Activated B cell treated with CpG ODN at 0.5 μM for 24 hours (primary cell): ENCODE measurements at regions of chr2 and their contacts with region 1.

Region 1: DNA sequence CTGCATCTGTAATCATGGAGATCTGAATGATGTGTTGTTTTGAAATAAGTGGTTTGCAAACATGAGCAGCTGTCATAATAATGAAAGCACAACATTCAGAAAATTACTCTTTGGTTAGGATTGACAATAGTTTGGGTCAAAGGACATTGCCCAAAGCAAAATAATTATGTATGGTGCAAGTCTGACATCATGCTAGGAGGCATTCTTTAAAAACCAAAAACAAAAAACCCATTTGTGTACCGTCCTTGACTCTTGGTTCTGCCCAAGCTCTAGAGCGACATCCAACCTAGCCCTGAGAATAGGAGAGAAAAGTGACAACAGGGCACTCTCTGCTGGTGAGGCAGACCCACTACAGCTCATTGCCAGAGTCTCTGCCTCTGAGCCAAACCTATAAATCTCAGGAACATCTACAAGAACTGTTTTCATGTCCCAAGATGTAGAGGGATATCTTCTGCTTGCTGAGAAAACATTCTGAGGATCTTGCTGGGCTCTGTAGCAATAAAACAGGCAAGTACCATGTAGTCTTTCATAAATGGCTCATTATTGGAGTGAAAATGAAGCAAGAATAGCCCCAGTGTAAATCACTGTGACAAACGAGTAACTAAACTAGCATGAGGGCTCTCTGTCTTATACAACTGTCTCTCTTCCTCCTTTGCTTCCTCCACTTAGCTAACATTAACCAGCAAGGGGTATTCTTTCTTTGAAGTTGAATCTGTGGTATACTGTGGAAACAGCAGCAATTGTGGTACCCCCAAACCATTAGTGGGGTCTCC is 266.8 kb upstream of the CXCR4 start:
- DNase-seq: no peak
- ATAC-seq: peak; percentile 67
- H3K4me3 Mint-ChIP-seq: peak overlapping the region; percentile 33
- H3K27ac Mint-ChIP-seq: peak overlapping the region; percentile 94
- H3K4me1 Mint-ChIP-seq: peaks cover 50% of the 10 kb centered on the region
- H3K27me3 Mint-ChIP-seq: no peaks in the 10 kb centered on the region
- CTCF ChIP-seq: peak; percentile 38

Region 2: DNA sequence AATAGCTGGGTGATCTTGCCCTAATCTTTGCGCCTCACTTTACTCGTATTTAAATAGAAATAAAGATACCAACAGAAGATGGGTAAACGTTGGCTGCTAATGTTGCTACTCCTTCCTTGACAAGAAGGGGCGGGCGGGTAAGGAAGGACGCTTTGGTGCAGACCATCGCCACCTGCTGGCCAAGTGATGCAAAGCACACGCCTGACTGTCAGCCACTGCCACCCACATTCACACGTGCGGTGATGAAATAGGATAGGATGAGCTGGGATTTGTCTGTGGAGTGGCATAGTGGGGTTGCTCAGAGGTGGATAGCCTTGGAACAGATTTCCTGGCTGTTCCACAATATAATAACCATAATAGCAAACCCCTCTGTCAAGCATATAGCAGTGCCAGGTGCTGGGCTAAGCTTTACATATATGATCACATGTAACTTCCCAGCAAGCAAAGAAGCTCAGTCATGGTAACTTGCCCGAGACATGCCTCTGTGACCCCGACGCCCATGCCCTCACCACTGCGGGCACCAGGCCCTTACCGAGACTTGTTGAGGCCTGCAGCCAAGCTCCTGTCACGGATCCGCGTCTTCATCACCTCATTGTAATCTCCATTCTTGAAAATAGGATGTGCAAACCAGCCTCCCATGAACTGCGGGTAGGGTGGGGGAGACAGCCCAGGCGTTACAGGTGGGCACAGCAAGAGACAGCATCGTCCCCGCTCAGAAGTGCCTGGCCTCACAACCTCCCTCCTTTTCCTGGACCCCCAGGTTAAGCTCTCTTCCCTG is 587.0 kb before region 1 on chr2:
- CTCF ChIA-PET with region 1: interaction called, 10 read pairs
- POLR2A ChIA-PET with region 1: no interaction called
- intact Hi-C with region 1: no loop called
- DNase-seq: peak; percentile 59
- ATAC-seq: peak; percentile 81
- H3K4me3 Mint-ChIP-seq: no peak overlapping the region
- H3K27ac Mint-ChIP-seq: no peak overlapping the region
- H3K4me1 Mint-ChIP-seq: peaks cover 15% of the 10 kb centered on the region
- H3K27me3 Mint-ChIP-seq: no peaks in the 10 kb centered on the region
- CTCF ChIP-seq: peak; percentile 62

Region 3: DNA sequence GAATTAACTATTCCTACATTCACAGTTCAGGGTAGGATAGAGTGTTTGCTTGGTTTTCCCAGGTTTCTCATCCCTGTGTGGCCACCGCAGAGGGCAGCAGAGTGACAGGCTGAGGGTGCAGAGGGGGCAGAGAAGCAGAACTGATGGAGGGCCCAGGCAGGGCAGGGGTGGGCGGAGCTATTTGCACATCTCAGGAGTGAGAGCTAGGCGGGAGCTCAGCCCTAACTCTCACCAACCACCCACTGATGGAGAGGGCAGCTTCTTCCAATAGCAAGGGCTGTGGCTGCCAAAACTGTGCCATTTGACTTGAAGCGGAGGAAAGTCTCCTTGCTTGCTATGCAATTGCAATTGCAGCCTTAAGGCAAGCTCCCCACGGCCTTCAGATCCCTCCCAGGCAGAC is 387.3 kb before region 1 on chr2:
- CTCF ChIA-PET with region 1: interaction called, 77 read pairs
- POLR2A ChIA-PET with region 1: interaction called, 30 read pairs
- intact Hi-C with region 1: no loop called
- DNase-seq: peak; percentile 41
- ATAC-seq: peak; percentile 97
- H3K4me3 Mint-ChIP-seq: peak overlapping the region; percentile 24
- H3K27ac Mint-ChIP-seq: peak overlapping the region; percentile 86
- H3K4me1 Mint-ChIP-seq: peaks cover 51% of the 10 kb centered on the region
- H3K27me3 Mint-ChIP-seq: no peaks in the 10 kb centered on the region
- CTCF ChIP-seq: no peak

Region 4: DNA sequence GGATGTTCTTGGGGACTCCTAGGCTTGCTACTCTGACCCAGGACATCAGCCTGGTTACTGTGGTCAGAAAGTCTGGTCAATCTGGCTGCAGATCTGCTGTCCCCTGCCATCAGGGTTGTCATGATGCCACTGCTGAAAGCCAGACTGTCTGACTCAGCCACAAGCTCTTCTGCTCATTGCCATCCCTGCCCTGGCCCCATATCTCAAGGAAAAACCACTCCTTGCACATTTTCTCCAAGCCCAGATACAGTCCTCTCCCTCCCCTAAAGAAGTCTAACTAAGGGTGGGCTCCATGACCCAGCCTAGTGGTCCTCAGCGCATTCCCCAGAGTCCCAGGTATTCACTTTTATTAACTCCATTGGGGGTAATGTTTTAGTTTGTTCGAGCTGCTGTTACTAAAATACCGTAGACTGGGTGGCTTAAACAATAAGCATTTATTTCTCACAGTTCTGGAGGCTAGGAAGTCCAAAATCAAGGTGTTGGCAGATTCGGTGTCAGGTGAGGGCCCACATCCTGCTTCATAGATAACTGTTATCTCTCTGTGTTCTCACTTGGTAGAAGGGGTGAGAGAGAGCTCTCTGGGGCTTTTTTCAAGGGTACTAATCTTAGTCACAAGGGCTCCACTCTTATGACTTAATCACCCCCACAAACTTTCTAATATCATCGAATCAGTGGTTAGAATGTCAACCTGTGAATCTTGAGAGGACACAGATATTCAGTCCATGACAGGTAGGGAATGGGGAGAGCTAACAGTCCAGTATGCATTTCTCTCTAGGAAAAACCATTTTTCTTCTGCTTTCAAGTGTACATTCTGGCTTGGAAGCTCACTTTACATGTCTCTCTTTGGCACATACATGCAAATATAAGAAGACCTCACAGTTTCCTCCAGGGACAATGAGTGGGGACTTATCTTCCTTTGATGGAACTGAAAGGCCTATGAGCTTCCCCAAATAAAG is 172.0 kb before region 1 on chr2:
- CTCF ChIA-PET with region 1: interaction called, 4 read pairs
- POLR2A ChIA-PET with region 1: interaction called, 47 read pairs
- intact Hi-C with region 1: no loop called
- DNase-seq: no peak
- ATAC-seq: peak; percentile 72
- H3K4me3 Mint-ChIP-seq: peak overlapping the region; percentile 64
- H3K27ac Mint-ChIP-seq: peak overlapping the region; percentile 97
- H3K4me1 Mint-ChIP-seq: peaks cover 97% of the 10 kb centered on the region
- H3K27me3 Mint-ChIP-seq: no peaks in the 10 kb centered on the region
- CTCF ChIP-seq: no peak